Mammary epithelial cell (primary cell): ENCODE measurements at regions of chr20 and their contacts with region 1.

Region 1: GRCh38 chr20:35849706-35850105 is 77.9 kb downstream of the PHF20 start:
- DNase-seq: no peak
- H3K4me3 ChIP-seq: no peak overlapping the region
- H3K27ac ChIP-seq: no peak overlapping the region
- H3K4me1 ChIP-seq: no peaks in the 10 kb centered on the region
- H3K27me3 ChIP-seq: no peaks in the 10 kb centered on the region
- CTCF ChIP-seq: no peak

Region 2: DNA sequence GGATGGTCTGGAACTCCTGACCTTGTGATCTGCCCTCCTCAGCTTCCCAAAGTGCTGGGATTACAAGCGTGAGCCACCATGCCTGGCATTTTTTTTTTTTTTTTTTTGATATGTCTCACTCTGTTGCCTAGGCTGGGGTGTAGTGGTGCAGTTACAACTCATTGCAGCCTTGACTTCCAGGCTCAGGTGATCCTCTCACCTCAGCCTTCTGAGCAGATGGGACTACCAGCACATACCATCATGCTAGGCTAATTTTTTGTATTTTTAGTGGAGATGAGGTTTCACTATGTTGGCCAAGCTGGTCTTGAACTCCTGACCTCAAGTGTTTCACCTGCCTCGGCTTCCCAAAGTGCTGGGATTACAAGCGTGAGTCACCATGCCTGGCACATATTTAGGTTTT is 43.6 kb before region 1 on chr20:
- CTCF ChIA-PET with region 1: interaction called, 18 read pairs
- dilution Hi-C with region 1: no loop called
- in situ Hi-C with region 1: no loop called
- intact Hi-C with region 1: no loop called
- DNase-seq: no peak
- H3K4me3 ChIP-seq: no peak overlapping the region
- H3K27ac ChIP-seq: no peak overlapping the region
- H3K4me1 ChIP-seq: no peaks in the 10 kb centered on the region
- H3K27me3 ChIP-seq: no peaks in the 10 kb centered on the region
- CTCF ChIP-seq: no peak